Panc1 (cell line): ENCODE measurements at regions of chr4 and their contacts with region 1.

Region 1: DNA sequence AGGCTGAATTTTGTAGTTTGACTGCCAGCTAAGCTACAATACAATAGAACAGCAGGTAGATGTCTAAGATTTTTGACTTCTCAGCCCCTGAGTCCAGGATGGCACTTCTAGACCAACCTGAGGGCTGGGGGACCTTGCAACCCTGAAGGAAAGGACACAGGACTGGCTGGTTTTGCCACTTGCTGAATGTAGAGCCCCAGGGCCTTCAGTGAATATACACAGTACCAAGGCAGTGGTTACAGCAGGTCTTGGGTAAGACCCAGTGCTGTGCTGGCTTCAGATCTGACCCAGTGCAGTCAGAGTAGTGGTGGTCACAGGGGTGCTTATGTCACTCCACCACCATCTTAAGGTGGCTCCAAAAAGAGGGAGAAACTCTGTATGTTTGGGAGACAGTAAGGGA is 277.5 kb upstream of the PCDH10 start:
- DNase-seq: no peak
- ATAC-seq: no peak
- H3K4me3 ChIP-seq: no peak overlapping the region
- H3K27ac ChIP-seq: no peak overlapping the region
- H3K4me1 ChIP-seq: no peaks in the 10 kb centered on the region
- H3K27me3 ChIP-seq: no peaks in the 10 kb centered on the region
- CTCF ChIP-seq: no peak

Region 2: DNA sequence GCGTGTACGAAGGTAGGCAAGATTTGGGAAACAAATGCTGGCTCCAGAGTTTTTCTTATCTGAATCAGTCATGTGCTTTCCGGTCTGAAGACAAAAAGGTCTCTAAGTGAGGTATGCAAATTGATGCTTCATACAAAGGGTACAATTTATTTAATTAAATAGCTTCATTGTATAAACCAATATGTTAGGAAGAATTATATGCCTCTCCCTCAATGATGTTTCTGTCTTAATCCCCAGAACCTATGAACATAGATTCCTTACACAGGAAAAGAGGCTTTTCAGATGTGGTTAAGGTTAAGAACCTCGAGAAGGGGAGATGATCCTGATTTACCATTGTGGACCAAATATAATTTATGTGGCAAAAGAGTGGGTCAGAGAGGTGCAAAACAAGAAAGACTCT is 266.1 kb before region 1 on chr4:
- CTCF ChIA-PET with region 1: no interaction called
- POLR2A ChIA-PET with region 1: no interaction called
- in situ Hi-C with region 1: no loop called
- intact Hi-C with region 1: no loop called
- DNase-seq: no peak
- ATAC-seq: no peak
- H3K4me3 ChIP-seq: no peak overlapping the region
- H3K27ac ChIP-seq: no peak overlapping the region
- H3K4me1 ChIP-seq: no peaks in the 10 kb centered on the region
- H3K27me3 ChIP-seq: no peaks in the 10 kb centered on the region
- CTCF ChIP-seq: no peak

Region 3: GRCh38 chr4:133095591-133095990 is 224.0 kb after region 1 on chr4:
- CTCF ChIA-PET with region 1: no interaction called
- POLR2A ChIA-PET with region 1: no interaction called
- in situ Hi-C with region 1: no loop called
- intact Hi-C with region 1: loop called (anchors 10 kb)
- DNase-seq: no peak
- ATAC-seq: no peak
- H3K4me3 ChIP-seq: no peak overlapping the region
- H3K27ac ChIP-seq: no peak overlapping the region
- H3K4me1 ChIP-seq: no peaks in the 10 kb centered on the region
- H3K27me3 ChIP-seq: no peaks in the 10 kb centered on the region
- CTCF ChIP-seq: no peak

Region 4: DNA sequence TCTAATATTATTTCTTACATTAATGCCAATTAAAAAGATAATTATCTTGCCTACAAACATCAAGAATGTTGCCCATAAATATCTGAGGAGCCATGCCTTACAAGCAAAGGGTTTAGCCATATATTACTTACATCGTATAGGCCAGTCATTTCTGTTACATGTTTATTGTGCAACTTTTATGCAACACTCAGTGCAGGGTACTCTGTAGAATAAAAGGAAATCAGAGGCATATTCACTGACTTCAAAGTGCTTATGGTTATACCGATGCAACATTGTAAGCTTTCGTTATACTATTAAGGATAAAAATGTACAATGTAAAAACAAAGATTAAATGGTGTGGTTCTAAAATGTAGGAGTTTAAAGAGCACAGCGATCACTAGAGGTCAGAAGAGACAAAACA is 593.4 kb after region 1 on chr4:
- CTCF ChIA-PET with region 1: no interaction called
- POLR2A ChIA-PET with region 1: no interaction called
- in situ Hi-C with region 1: no loop called
- intact Hi-C with region 1: no loop called
- DNase-seq: no peak
- ATAC-seq: no peak
- H3K4me3 ChIP-seq: no peak overlapping the region
- H3K27ac ChIP-seq: no peak overlapping the region
- H3K4me1 ChIP-seq: no peaks in the 10 kb centered on the region
- H3K27me3 ChIP-seq: no peaks in the 10 kb centered on the region
- CTCF ChIP-seq: no peak